Ovary (tissue), 10 donors: ENCODE measurements at regions of chr9 and their contacts with region 1.

Region 1: DNA sequence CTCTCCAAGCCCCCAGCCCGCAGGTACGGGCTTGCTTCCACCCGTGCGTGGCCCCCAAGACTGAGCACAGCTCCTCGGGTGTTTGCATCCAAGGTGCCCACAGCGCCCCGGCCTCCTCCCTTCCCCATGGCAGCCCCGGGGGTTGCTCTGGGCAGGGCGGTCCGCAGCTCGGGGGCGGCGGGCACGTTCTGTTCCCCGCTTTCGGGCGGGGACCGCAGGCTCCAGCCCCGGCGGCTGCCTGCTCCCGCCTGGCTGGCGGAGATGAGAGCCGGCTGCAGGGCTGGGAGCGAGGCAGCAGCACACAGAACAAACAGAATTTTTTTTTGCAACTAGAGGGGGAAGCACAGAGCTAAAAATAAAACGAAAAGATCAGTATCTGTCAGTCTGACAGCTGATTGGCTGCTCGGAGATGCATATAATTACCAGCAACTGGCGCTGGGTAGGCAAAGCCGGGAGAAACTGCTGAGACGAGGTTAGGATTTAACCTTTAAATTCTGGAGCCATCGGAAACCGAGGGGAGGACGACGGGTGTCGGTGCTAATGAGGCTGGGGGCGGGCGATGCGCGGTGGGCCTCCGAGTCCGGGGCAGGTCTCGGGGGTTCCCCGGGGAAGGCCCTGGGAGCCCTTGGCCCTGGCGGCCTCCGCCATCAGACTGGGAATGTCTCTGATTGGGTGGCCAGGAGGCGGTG is 142.7 kb upstream of the IER5L start:
- DNase-seq: peak; percentile 62 to 84 (median 64)
- H3K4me3 ChIP-seq: peak overlapping the region; percentile 34
- H3K27ac ChIP-seq: peak overlapping the region; percentile 88 to 94
- H3K4me1 ChIP-seq: peaks cover 35% of the 10 kb centered on the region
- H3K27me3 ChIP-seq: no peaks in the 10 kb centered on the region
- CTCF ChIP-seq: peak in 1 of 3 donors; percentile 26
- EP300 ChIP-seq: no peak
- POLR2A ChIP-seq: no peak

Region 2: DNA sequence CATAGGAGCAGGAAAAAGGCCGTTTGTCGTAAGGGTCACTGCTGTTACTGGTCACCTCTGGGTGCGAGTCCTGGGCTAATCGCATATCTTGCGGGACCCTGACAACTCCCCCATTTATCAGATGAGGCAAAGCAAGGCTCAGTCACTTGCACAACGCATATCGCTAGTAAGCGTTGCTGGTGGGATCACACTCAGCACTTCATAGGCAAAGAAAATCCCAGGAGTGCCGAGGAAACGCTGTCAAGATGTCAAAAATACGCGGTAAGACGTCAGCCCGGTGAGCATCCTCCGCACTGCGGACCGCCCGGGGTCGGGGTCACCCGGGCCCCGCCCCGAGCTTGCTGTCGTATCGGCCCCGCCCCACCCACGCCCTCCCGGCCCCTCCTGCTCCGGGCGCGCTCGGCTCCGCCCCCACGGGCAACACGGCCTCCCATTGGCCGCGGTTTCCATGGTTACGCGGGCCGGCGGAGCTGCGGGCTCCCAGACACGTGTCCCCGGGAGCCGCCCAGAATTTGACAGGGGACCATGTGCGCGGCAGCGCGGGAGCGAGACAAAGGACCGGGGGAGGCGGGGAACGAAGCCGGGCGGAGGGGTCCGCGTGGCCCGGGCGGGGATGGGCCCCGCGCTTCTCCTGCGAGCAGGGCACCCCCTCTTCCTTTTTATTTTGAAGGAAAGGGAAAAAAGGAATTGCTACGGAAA is 62.4 kb before region 1 on chr9:
- intact Hi-C with region 1: loop called in 1 of 4 experiments (anchors 5 kb)
- DNase-seq: peak; percentile 96 to 98 (median 98)
- H3K4me3 ChIP-seq: peak overlapping the region; percentile 31
- H3K27ac ChIP-seq: peak overlapping the region in 1 of 2 donors; percentile 95
- H3K4me1 ChIP-seq: peaks cover 19% of the 10 kb centered on the region
- H3K27me3 ChIP-seq: no peaks in the 10 kb centered on the region
- CTCF ChIP-seq: peak in 1 of 3 donors; percentile 13
- EP300 ChIP-seq: peak; percentile 72
- POLR2A ChIP-seq: no peak

Region 3: GRCh38 chr9:129460323-129461261 is 139.9 kb after region 1 on chr9:
- intact Hi-C with region 1: no loop called
- DNase-seq: peak; percentile 97 to 99 (median 99)
- H3K4me3 ChIP-seq: peak overlapping the region; percentile 46
- H3K27ac ChIP-seq: peak overlapping the region; percentile 87 to 99
- H3K4me1 ChIP-seq: peaks cover 29% of the 10 kb centered on the region
- H3K27me3 ChIP-seq: no peaks in the 10 kb centered on the region
- CTCF ChIP-seq: peak in 2 of 3 donors; percentile 30 to 32
- EP300 ChIP-seq: no peak
- POLR2A ChIP-seq: peak; percentile 89

Region 4: DNA sequence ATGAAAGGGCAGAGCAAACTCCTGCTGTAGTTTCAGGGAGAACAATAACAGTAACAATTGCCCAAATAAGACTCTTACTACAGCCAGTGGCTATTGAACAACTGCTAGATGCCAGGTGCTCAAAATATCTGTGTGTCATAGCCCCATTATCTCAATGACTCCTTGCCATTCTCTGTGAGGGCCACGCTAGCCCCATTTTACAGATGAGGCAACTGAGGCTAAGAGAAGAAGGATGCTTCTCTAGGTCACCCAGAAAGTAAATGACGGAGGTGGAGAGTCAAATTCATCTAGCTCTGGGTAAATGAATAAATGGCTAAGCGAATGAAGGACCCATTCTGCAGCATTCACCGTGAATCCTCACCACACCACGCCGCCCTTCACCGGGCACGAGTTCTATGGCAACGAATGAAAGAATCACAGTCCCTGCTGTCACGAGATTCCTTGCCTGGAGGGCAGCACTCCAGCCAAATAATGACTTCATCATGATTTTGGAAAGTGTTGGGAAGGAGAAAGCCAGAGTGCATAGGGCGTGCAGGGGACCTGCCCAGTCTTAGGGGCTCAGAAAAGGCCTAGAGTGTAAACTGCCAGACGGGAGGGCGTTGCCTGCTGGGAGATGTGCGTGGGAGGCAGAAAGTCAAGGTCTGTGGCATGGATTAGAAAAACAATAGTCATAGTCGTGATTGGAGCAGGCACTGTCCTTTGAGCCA is 153.0 kb after region 1 on chr9:
- intact Hi-C with region 1: loop called in 1 of 4 experiments (anchors 5 kb)
- DNase-seq: peak; percentile 76 to 82 (median 80)
- H3K4me3 ChIP-seq: no peak overlapping the region
- H3K27ac ChIP-seq: peak overlapping the region; percentile 5 to 87
- H3K4me1 ChIP-seq: peaks cover 21% of the 10 kb centered on the region
- H3K27me3 ChIP-seq: no peaks in the 10 kb centered on the region
- CTCF ChIP-seq: no peak
- EP300 ChIP-seq: peak; percentile 31
- POLR2A ChIP-seq: no peak

Region 5: DNA sequence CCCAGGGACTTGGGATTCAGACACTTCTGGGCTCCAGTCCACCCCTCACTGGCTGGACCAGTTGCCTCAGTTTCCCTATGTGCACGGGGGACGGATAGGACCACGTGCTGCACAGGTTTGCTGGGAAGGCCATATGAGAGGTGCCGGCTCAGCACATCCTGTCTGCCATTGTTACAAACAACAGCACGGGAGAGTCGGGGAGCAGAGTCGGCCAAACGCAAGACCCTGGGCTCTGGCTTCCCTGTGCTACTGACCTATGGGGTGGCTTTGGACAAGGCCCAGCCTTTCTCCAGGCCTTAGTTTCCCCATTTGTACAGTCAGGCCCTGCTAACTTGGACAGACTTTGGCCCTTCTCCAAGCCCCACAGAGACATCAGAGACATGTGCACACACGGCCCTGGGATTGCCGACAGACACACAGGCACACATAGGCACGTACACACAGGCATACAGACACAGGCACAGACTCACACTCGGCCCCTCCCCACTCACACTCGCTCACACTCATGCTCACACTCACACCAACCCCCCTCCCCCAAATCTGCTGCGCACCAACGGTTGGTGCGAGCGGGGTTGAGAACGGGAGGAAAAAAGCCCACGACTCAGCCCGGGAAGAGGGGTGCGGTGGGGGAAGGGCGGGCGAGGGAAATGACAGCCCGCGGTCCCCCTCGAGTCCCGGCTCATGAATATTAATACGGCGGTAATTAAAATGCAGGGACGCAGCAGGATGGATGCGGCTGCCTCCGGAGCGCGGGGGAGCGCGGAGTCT is 167.1 kb after region 1 on chr9:
- intact Hi-C with region 1: loop called in 2 of 4 experiments (anchors 5 kb)
- DNase-seq: peak in 4 of 5 donors; percentile 69 to 80 (median 76)
- H3K4me3 ChIP-seq: peak overlapping the region; percentile 53
- H3K27ac ChIP-seq: peak overlapping the region; percentile 96 to 100
- H3K4me1 ChIP-seq: peaks cover 34% of the 10 kb centered on the region
- H3K27me3 ChIP-seq: no peaks in the 10 kb centered on the region
- CTCF ChIP-seq: no peak
- EP300 ChIP-seq: no peak
- POLR2A ChIP-seq: no peak